T-cell (primary cell): ENCODE measurements at regions of chr15 and their contacts with region 1.

Region 1: GRCh38 chr15:84818261-84819131 is 1.3 kb downstream of the ALPK3 start:
- DNase-seq: peak in 10 of 35 experiments; percentile 5 to 29 (median 10)
- ATAC-seq: peak in 3 of 4 experiments; percentile 53 to 69 (median 66)
- H3K4me3 ChIP-seq: no peak overlapping the region
- H3K4me3 Mint-ChIP-seq: peak overlapping the region in 2 of 3 donors; percentile 9 to 50
- H3K27ac ChIP-seq: no peak overlapping the region
- H3K27ac Mint-ChIP-seq: peak overlapping the region in 1 of 2 donors; percentile 67
- H3K4me1 ChIP-seq: peaks cover 8 to 14% of the 10 kb centered on the region in 2 experiments
- H3K4me1 Mint-ChIP-seq: peaks cover 7 to 19% (median 14%) of the 10 kb centered on the region in 3 donors
- H3K27me3 ChIP-seq: peaks cover 0 to 17% of the 10 kb centered on the region in 2 experiments
- H3K27me3 Mint-ChIP-seq: peaks cover 5 to 17% of the 10 kb centered on the region in 2 donors

Region 2: DNA sequence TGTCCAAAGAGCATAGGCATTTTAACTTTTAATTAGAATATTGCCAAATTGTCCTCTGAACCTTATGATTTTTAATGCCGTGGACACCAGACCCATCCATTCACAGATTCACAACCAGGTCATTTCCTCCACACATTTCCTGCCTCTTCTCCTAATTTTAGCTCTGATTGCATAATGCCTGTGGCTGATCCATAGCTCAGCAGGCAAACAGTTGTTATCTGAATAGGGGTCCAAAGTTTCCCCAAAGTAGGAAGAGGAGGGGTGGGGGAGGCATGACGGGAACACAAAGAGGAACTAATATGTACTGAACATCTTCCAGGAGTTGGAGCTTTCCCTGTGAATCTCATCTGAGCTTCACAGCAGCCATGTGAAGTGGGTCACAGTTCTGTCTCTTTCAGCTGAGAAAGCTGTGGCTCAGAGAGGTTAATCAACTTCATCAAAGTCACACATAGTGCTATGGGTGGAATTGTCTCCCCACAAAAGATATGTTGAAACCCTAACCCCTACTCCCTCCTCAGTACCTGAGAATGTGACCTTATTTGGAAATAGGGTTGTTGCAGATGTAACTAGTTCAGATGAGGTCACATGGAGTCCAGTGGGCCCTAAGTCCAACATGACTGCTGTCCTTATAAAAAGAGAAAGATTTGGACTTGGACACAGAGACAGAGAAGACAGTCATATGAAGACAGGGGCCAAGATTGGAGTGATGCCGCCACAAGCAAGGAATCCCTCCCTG is 1154.5 kb after region 1 on chr15:
- CTCF ChIA-PET with region 1: interaction called in 1 of 2 experiments, 13 read pairs
- POLR2A ChIA-PET with region 1: no interaction called
- DNase-seq: no peak
- ATAC-seq: no peak
- H3K4me3 ChIP-seq: no peak overlapping the region
- H3K4me3 Mint-ChIP-seq: no peak overlapping the region
- H3K27ac ChIP-seq: no peak overlapping the region
- H3K27ac Mint-ChIP-seq: no peak overlapping the region
- H3K4me1 ChIP-seq: no peaks in the 10 kb centered on the region
- H3K4me1 Mint-ChIP-seq: no peaks in the 10 kb centered on the region
- H3K27me3 ChIP-seq: peaks cover 0 to 4% of the 10 kb centered on the region in 2 experiments
- H3K27me3 Mint-ChIP-seq: peaks cover 7 to 11% of the 10 kb centered on the region in 2 donors

Region 3: DNA sequence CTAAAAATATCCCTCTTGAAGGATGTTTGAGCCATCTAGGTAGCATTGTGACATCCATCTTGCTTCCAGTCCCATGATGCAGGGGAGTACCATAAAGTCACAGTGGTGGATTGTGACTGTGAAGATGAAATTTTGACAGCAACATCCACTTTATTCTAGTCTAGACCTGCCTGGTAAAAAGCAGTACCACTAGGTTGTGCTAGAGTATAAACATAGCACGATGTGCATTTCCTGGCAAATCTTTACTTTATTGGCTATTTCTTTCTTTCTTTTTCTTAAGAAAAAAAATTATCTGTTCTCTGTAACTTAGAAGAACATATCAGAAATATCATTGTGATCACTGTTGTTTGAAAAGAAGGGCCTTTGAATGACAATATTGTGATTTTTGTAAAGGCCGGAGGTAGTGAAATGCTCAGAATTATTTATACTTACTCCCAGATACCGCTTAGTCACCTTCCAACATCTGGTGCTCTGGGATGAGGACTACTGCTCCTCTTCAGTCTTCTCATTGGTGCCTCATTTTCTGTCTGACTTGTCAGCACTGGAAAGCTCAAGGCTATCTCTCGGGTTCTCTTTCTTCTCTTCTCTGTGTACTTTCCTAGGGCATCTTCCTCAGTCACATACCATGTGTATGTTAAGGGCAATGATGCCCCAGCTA is 1296.8 kb after region 1 on chr15:
- CTCF ChIA-PET with region 1: no interaction called
- POLR2A ChIA-PET with region 1: no interaction called
- DNase-seq: peak in 1 of 35 experiments; percentile 1
- ATAC-seq: no peak
- H3K4me3 ChIP-seq: no peak overlapping the region
- H3K4me3 Mint-ChIP-seq: no peak overlapping the region
- H3K27ac ChIP-seq: no peak overlapping the region
- H3K27ac Mint-ChIP-seq: no peak overlapping the region
- H3K4me1 ChIP-seq: no peaks in the 10 kb centered on the region
- H3K4me1 Mint-ChIP-seq: no peaks in the 10 kb centered on the region
- H3K27me3 ChIP-seq: no peaks in the 10 kb centered on the region
- H3K27me3 Mint-ChIP-seq: peaks cover 4 to 12% of the 10 kb centered on the region in 2 donors